HCT116 (cell line): ENCODE measurements at regions of chr16 and their contacts with region 1.

Region 1: GRCh38 chr16:2142942-2143877 is 5.2 kb upstream of the RAB26 start:
- DNase-seq: no peak
- ATAC-seq: no peak
- H3K4me3 ChIP-seq: no peak overlapping the region
- H3K27ac ChIP-seq: no peak overlapping the region
- H3K4me1 ChIP-seq: peaks cover 8 to 32% of the 10 kb centered on the region in 2 experiments; a peak in 3 of 4 replicates
- H3K27me3 ChIP-seq: no peaks in the 10 kb centered on the region
- CTCF ChIP-seq: no peak
- POLR2A ChIP-seq: no peak
- RAD21 ChIP-seq: no peak

Region 2: DNA sequence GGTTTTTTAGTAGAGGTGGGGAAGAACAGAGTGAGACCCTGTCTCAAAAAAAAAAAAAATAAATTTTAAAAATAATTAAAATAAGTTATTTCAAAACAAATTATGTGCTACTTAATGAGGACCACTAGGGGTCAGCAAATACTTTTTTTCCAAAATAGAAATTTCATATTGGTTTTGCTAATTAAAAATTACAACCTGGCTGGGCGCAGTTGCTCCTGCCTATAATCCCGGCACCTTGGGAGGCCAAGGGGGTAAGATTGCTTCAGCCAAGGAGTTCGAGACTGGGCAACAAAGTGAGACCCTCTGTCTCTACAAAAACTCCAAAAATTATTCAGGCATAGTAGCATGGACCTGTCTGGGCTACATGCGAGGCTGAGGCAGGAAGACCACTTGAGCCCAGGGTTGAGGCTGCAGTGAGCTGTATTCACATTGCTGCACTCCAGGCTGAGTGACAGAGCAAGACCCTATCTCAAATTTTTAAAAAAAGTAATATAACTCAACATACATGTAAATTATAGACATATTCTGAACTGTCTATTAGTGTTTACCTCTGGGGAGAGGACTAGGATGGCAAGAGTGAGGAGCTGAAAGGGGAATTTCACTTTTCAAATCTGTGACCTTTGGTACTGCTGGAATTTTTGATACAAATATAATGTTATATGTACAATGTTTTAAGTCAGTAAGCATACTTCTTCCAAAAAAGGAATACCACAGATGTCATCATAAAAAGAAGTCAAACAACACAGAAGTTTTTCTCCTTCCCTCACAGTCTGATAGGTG is 279.3 kb before region 1 on chr16:
- CTCF ChIA-PET with region 1: interaction called, 5 read pairs
- POLR2A ChIA-PET with region 1: no interaction called
- RAD21 ChIA-PET with region 1: no interaction called
- intact Hi-C with region 1: loop called (anchors 2 kb)
- DNase-seq: peak; percentile 40
- ATAC-seq: peak; percentile 65
- H3K4me3 ChIP-seq: no peak overlapping the region
- H3K27ac ChIP-seq: no peak overlapping the region
- H3K4me1 ChIP-seq: peaks cover 11% of the 10 kb centered on the region in 2 experiments; a peak in 3 of 4 replicates
- H3K27me3 ChIP-seq: no peaks in the 10 kb centered on the region
- CTCF ChIP-seq: peak; percentile 33 to 90 (median 42); a peak in 4 of 6 replicates
- POLR2A ChIP-seq: no peak
- RAD21 ChIP-seq: peak; percentile 82

Region 3: GRCh38 chr16:2003827-2004641 is 139.2 kb before region 1 on chr16:
- CTCF ChIA-PET with region 1: interaction called, 20 read pairs
- POLR2A ChIA-PET with region 1: interaction called, 9 read pairs
- RAD21 ChIA-PET with region 1: interaction called, 4 to 7 read pairs
- intact Hi-C with region 1: loop called (anchors 5 kb)
- DNase-seq: peak; percentile 87
- ATAC-seq: peak; percentile 91
- H3K4me3 ChIP-seq: no peak overlapping the region
- H3K27ac ChIP-seq: peak overlapping the region; percentile 62; the same call in 1 of the 2 replicates
- H3K4me1 ChIP-seq: peaks cover 23 to 50% of the 10 kb centered on the region in 2 experiments
- H3K27me3 ChIP-seq: no peaks in the 10 kb centered on the region
- CTCF ChIP-seq: peak; percentile 93 to 99 (median 99)
- POLR2A ChIP-seq: no peak
- RAD21 ChIP-seq: peak; percentile 77

Region 4: GRCh38 chr16:2023098-2023925 is 119.9 kb before region 1 on chr16:
- CTCF ChIA-PET with region 1: interaction called, 15 read pairs
- POLR2A ChIA-PET with region 1: interaction called, 8 read pairs
- RAD21 ChIA-PET with region 1: interaction called, 3 to 12 read pairs
- intact Hi-C with region 1: loop called (anchors 1 kb)
- DNase-seq: peak; percentile 77
- ATAC-seq: peak; percentile 64
- H3K4me3 ChIP-seq: peak overlapping the region; percentile 36 to 50
- H3K27ac ChIP-seq: peak overlapping the region; percentile 88
- H3K4me1 ChIP-seq: peaks cover 42 to 67% of the 10 kb centered on the region in 2 experiments
- H3K27me3 ChIP-seq: no peaks in the 10 kb centered on the region
- CTCF ChIP-seq: peak in 2 of 3 experiments; percentile 91 to 92; a peak in 4 of 6 replicates
- POLR2A ChIP-seq: peak; percentile 35
- RAD21 ChIP-seq: no peak

Region 5: DNA sequence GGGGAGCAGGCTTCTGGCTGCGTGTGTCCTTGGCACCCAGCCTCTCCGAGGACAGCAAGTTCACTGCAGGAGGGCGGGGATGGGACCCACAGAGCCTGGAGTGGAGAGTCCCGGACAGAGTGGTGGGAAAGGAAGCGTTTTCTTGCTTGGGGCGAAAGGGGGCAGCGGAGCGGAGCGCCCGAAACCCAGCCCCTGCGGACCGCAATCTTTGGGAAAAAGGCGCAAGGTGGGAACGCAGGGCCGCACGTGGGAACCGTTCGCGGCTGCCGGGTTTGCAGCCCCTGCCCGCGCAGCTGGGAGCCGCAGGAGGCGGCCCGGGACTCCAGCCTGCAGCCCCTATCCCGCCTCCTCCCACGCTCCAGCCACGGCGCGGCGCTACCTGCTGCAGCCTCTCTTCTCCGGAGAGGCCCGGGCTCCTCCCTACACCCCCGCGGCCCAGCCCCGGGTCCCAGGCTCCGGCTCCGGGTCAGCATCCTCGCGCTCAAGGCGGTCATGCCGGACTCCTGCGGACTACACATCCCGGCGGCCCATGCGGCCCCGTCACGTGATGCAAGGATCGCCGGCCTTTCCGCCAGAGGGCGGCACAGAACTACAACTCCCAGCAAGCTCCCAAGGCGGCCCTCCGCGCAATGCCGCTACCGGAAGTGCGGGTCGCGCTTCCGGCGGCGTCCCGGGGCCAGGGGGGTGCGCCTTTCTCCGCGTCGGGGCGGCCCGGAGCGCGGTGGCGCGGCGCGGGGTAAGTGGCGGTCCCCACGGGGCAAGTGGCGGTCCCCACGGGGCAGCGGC is 95.7 kb before region 1 on chr16 and contains the starts of genes NTHL1 and TSC2:
- CTCF ChIA-PET with region 1: interaction called, 4 read pairs
- POLR2A ChIA-PET with region 1: interaction called, 3 read pairs
- RAD21 ChIA-PET with region 1: no interaction called
- intact Hi-C with region 1: loop called (anchors 5 kb)
- DNase-seq: peak; percentile 91
- ATAC-seq: peak; percentile 96
- H3K4me3 ChIP-seq: peak within 1 kb of the TSS; percentile 64 to 88
- H3K27ac ChIP-seq: peak within 1 kb of the TSS; percentile 71
- H3K4me1 ChIP-seq: peaks cover 6 to 34% of the 10 kb centered on the region in 2 experiments; a peak in 3 of 4 replicates
- H3K27me3 ChIP-seq: no peaks in the 10 kb centered on the region
- CTCF ChIP-seq: peak in 2 of 3 experiments; percentile 7 to 21; a peak in 1 of 6 replicates
- POLR2A ChIP-seq: peak; percentile 67
- RAD21 ChIP-seq: no peak
- total RNA-seq, gene NTHL1: 40.1 TPM
- total RNA-seq, gene TSC2: 74.1 TPM

Region 6: DNA sequence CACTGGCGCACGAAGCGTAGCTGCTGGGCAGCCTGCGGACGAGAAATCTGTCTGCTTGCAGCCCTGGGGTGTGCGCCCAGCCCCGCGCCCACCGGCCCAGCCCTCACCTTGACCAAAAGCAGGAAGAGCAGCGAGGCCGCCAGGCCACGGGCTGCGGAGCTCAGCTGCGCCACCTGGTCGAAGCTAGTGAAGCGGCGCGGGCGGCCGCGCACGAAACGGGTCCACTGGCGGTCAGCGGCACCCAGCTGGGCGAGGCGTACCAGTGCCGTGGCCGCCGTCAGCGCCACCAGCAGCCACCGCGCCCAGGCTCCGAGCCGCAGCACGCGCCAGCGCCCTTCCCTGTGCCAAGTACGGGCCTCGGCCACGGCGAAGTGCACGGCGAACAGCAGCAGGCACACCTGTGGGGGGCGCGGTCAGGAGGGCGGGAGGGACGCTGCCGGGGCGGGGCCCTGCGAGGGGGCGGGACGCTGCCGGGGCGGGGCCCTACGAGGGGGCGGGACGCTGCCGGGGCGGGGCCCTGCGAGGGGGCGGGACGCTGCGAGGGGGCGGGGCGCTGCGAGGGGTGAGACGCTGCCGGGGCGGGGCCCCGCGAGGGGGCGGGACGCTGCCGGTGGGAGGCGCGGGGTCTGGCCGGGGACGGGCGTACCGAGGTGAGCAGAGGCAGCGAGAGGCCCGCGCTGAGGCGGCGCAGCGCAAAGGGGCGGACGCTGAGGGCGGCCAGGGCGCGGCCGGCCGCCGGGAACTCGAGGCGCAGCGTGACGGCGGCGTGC is 52.2 kb before region 1 on chr16:
- CTCF ChIA-PET with region 1: interaction called, 18 read pairs
- POLR2A ChIA-PET with region 1: no interaction called
- RAD21 ChIA-PET with region 1: interaction called in 1 of 2 experiments, 4 read pairs
- intact Hi-C with region 1: no loop called
- DNase-seq: peak; percentile 66
- ATAC-seq: peak; percentile 82
- H3K4me3 ChIP-seq: peak overlapping the region; percentile 49 to 62
- H3K27ac ChIP-seq: peak overlapping the region; percentile 84
- H3K4me1 ChIP-seq: peaks cover 9 to 29% of the 10 kb centered on the region in 2 experiments
- H3K27me3 ChIP-seq: no peaks in the 10 kb centered on the region
- CTCF ChIP-seq: peak; percentile 54 to 63 (median 55)
- POLR2A ChIP-seq: no peak
- RAD21 ChIP-seq: peak; percentile 62

Region 7: DNA sequence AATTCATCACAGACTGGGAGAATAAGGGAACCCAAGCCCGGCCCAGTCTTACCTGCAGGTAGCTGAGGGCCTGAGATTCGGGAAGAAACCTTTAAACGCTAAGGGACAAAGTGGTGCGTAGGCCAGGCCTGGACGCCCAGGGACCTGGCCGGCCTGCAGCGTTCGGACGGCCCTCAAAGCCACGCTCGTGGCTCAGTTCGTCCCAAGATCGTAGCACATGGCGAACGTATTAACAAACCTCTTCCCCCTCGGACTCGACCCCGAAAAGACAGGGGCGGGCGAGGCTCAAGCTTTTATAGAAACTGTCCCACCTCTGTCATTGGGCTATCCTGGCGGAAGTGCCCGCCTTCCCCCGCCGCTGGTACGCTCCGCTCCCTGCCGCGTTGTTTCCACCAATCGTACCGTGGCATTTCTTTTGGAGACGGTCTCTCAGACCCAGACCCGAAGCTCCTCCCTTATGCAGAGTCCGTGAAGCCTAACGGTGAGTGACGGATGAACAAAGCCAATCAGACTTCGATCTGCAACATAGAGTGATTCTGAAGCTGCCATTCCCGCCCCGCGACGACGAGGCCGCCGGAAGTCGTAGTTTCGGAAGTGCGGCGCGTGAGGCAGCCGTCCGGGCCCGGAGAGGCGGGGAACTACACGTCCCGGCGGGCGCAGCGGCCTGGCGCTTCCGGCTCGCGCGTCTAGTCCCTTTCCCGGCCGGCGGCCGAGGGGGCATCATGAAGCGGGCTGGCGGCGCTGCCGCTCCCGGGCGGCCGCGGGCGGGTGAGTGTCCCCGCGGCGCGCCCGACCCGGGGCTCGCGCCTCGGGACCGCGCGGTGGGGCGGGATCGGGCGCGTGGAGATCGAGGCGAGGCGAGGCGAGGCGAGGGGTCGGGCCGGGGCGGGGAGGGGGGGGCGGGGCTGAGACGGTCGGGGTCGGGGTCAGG is 12.1 kb after region 1 on chr16 and contains the start of gene TRAF7:
- CTCF ChIA-PET with region 1: interaction called, 24 read pairs
- POLR2A ChIA-PET with region 1: interaction called, 18 read pairs
- RAD21 ChIA-PET with region 1: interaction called in 1 of 2 experiments, 3 read pairs
- intact Hi-C with region 1: no loop called
- DNase-seq: peak; percentile 100
- ATAC-seq: peak; percentile 74
- H3K4me3 ChIP-seq: peak within 1 kb of the TSS; percentile 98 to 100
- H3K27ac ChIP-seq: peak within 1 kb of the TSS; percentile 84
- H3K4me1 ChIP-seq: peaks cover 48 to 74% of the 10 kb centered on the region in 2 experiments
- H3K27me3 ChIP-seq: no peaks in the 10 kb centered on the region
- CTCF ChIP-seq: no peak
- POLR2A ChIP-seq: peak; percentile 99
- RAD21 ChIP-seq: no peak
- total RNA-seq, gene TRAF7: 160 TPM